ENCODE measurements at regions of chr12 and their contacts with region 1.

Region 1: DNA sequence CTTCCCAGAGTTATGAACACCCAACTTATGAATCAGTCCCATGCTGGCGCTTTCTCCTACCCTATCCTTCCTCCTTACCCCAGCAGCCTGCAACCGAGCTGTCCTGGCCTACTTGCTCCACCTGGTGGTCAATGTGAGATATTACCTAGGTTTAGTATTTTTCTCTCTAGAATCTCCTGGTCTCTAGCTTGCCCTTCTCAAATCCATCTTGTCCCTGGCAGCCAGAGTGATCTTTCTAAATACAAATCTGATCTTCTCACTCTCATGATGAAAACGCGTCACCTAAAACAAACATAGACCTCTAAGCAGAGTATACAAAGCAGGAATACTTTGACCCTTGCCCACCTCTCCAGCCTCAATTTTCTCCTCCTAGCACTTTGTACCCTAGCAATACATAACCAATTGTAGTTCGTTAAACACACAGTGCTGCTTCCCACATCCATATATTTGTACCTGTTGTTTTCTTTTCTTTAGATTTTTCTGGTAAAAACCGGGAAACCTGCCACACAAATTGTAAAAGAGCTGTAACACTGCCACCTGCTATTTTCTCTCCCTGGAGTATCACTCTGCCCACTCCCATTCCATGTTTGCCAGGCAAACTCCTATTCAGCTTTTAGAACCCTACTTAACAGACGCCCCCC is 20.0 kb upstream of the TCP11L2 start:
- DNase-seq: peak; percentile 15 to 66 (median 48)
- ATAC-seq: peak; percentile 91
- H3K4me3 ChIP-seq: no peak overlapping the region
- H3K4me3 Mint-ChIP-seq: no peak overlapping the region
- H3K27ac ChIP-seq: no peak overlapping the region
- H3K27ac Mint-ChIP-seq: peak overlapping the region in 3 of 9 donors; percentile 3 to 41 (median 37)
- H3K4me1 ChIP-seq: no peaks in the 10 kb centered on the region
- H3K4me1 Mint-ChIP-seq: peaks cover 7 to 18% (median 8%) of the 10 kb centered on the region in 7 donors
- H3K27me3 ChIP-seq: no peaks in the 10 kb centered on the region
- H3K27me3 Mint-ChIP-seq: peaks cover 0 to 18% (median 4%) of the 10 kb centered on the region in 5 donors

Region 2: DNA sequence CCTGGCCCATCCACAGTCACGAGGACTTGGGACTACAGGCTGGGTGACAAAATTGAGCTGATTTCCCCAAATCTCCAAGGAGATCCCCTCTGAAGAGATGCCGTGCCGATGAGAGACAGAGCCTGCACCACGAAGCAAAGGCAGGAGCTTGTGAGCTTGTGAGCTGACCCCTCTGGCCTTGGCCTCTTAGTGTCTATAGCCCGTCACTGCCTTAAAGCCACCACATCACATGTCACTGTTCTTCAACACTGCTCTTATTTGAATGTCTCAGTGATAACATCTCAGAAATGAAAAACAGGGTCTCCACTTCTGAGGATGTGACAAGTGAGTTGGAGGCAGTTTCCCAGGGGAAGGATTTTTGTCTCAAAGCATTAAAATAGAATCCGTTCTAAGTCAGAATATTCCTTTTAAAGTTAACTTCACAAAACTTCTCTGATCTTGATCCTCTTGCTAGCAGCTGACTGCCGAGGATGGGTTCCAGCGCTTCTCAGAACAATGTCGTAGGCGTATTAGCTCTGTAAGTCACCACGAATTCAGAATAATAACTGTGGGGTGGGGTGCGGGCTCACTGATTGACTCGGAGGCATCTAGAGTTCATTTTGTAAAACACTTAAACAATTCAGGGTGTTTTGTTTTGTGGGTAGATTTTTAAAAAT is 1788.3 kb before region 1 on chr12:
- CTCF ChIA-PET with region 1: no interaction called
- POLR2A ChIA-PET with region 1: no interaction called
- intact Hi-C with region 1: no loop called
- DNase-seq: peak in 8 of 9 donors; percentile 31 to 51 (median 36)
- ATAC-seq: peak; percentile 51
- H3K4me3 ChIP-seq: peak overlapping the region; percentile 18
- H3K4me3 Mint-ChIP-seq: peak overlapping the region; percentile 18 to 88 (median 76)
- H3K27ac ChIP-seq: peak overlapping the region; percentile 42
- H3K27ac Mint-ChIP-seq: peak overlapping the region; percentile 78 to 93 (median 91)
- H3K4me1 ChIP-seq: peaks cover 72 to 85% of the 10 kb centered on the region in 2 donors
- H3K4me1 Mint-ChIP-seq: peaks cover 58 to 96% (median 86%) of the 10 kb centered on the region in 7 donors
- H3K27me3 ChIP-seq: no peaks in the 10 kb centered on the region
- H3K27me3 Mint-ChIP-seq: no peaks in the 10 kb centered on the region

Region 3: DNA sequence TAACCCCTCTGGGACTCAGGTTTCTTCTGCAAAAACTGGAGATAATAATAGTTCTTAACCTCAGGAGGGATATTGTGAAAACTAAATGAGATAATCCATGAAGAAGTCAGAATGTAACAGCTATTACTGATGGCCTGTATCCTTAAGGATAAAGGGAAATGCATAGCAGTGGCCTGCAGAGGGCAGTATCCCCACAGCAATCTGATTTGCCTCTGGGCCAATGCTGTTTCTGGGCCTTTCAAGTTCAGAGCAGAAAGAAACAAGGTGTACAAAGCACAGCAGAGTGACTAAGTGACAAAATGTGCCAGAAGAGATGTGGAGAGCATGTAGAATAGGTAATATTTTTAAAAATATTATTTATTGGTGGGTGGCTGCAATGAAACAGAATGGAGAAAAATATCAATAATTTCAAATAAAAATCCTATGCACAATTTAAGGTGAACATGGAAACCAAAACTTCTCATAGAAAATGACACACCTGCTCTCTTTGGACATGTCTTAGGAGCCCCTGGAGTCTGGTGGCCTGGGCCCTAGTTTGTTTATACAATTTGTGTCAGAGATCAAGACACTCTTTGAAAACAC is 861.8 kb before region 1 on chr12:
- CTCF ChIA-PET with region 1: no interaction called
- POLR2A ChIA-PET with region 1: no interaction called
- intact Hi-C with region 1: loop called (anchors 2 to 5 kb)
- DNase-seq: peak in 8 of 9 donors; percentile 8 to 56 (median 44)
- ATAC-seq: peak; percentile 78
- H3K4me3 ChIP-seq: no peak overlapping the region
- H3K4me3 Mint-ChIP-seq: no peak overlapping the region
- H3K27ac ChIP-seq: no peak overlapping the region
- H3K27ac Mint-ChIP-seq: no peak overlapping the region
- H3K4me1 ChIP-seq: no peaks in the 10 kb centered on the region
- H3K4me1 Mint-ChIP-seq: no peaks in the 10 kb centered on the region
- H3K27me3 ChIP-seq: no peaks in the 10 kb centered on the region
- H3K27me3 Mint-ChIP-seq: peaks cover 0 to 6% (median under 1%) of the 10 kb centered on the region in 5 donors

Region 4: GRCh38 chr12:106247674-106248311 is 34.8 kb before region 1 on chr12 and contains the start of gene CKAP4:
- CTCF ChIA-PET with region 1: interaction called, 4 read pairs
- POLR2A ChIA-PET with region 1: interaction called, 9 read pairs
- intact Hi-C with region 1: loop called (anchors 1 kb)
- DNase-seq: peak; percentile 45 to 65 (median 55)
- ATAC-seq: peak; percentile 59
- H3K4me3 ChIP-seq: peak within 1 kb of the TSS; percentile 69
- H3K4me3 Mint-ChIP-seq: peak within 1 kb of the TSS; percentile 81 to 92 (median 86)
- H3K27ac ChIP-seq: peak within 1 kb of the TSS; percentile 80
- H3K27ac Mint-ChIP-seq: peak within 1 kb of the TSS; percentile 58 to 98 (median 94)
- H3K4me1 ChIP-seq: peaks cover 17 to 22% of the 10 kb centered on the region in 2 donors
- H3K4me1 Mint-ChIP-seq: peaks cover 13 to 37% (median 31%) of the 10 kb centered on the region in 7 donors
- H3K27me3 ChIP-seq: no peaks in the 10 kb centered on the region
- H3K27me3 Mint-ChIP-seq: peaks cover 0 to 19% (median 0%) of the 10 kb centered on the region in 5 donors
- total RNA-seq, gene CKAP4: 4.3 to 27.2 (median 13.0) TPM

Region 5: GRCh38 chr12:106296193-106296877 is 13.8 kb after region 1 on chr12:
- CTCF ChIA-PET with region 1: interaction called, 20 read pairs
- POLR2A ChIA-PET with region 1: interaction called, 86 read pairs
- intact Hi-C with region 1: loop called in 1 of 2 experiments (anchors 1 kb)
- DNase-seq: no peak
- ATAC-seq: no peak
- H3K4me3 ChIP-seq: no peak overlapping the region
- H3K4me3 Mint-ChIP-seq: no peak overlapping the region
- H3K27ac ChIP-seq: no peak overlapping the region
- H3K27ac Mint-ChIP-seq: peak overlapping the region in 1 of 9 donors; percentile 25
- H3K4me1 ChIP-seq: peaks cover 0 to 12% of the 10 kb centered on the region in 2 donors
- H3K4me1 Mint-ChIP-seq: peaks cover 12 to 31% (median 22%) of the 10 kb centered on the region in 7 donors
- H3K27me3 ChIP-seq: no peaks in the 10 kb centered on the region
- H3K27me3 Mint-ChIP-seq: no peaks in the 10 kb centered on the region

Region 6: DNA sequence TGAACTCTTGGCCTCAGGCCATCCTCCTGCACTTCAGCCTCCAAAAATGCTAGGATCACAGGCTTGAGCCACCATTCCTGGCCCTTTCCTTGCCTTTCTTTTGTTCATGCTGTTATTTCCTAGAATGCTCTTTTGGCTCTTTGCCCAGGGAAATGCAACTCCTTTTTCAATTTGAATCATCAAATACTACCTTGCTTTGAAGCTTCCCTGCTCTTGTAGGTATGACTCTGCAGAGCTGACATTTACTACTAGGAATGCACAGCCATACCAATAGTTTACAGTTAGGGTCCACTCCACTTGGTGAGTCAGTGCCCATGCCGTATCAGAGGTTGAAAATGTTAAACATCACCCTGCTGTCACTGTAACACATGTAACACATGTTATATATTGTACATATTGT is 917.8 kb after region 1 on chr12:
- CTCF ChIA-PET with region 1: no interaction called
- POLR2A ChIA-PET with region 1: no interaction called
- intact Hi-C with region 1: no loop called
- DNase-seq: no peak
- ATAC-seq: no peak
- H3K4me3 ChIP-seq: no peak overlapping the region
- H3K4me3 Mint-ChIP-seq: no peak overlapping the region
- H3K27ac ChIP-seq: no peak overlapping the region
- H3K27ac Mint-ChIP-seq: no peak overlapping the region
- H3K4me1 ChIP-seq: no peaks in the 10 kb centered on the region
- H3K4me1 Mint-ChIP-seq: peaks cover 0 to 2% (median 0%) of the 10 kb centered on the region in 7 donors
- H3K27me3 ChIP-seq: no peaks in the 10 kb centered on the region
- H3K27me3 Mint-ChIP-seq: peaks cover 0 to 10% (median 4%) of the 10 kb centered on the region in 5 donors